Endothelial cell of umbilical vein (primary cell): ENCODE measurements at regions of chr9 and their contacts with region 1.

Region 1: GRCh38 chr9:93003552-93004407 is 54.7 kb upstream of the SUSD3 start:
- DNase-seq: peak; percentile 59
- H3K4me3 ChIP-seq: no peak overlapping the region
- H3K27ac ChIP-seq: no peak overlapping the region
- H3K4me1 ChIP-seq: no peaks in the 10 kb centered on the region
- H3K27me3 ChIP-seq: peaks cover 0 to 4% of the 10 kb centered on the region in 2 experiments
- CTCF ChIP-seq: peak; percentile 62 to 69
- POLR2A ChIP-seq: no peak

Region 2: GRCh38 chr9:92974151-92974710 is 29.5 kb before region 1 on chr9:
- CTCF ChIA-PET with region 1: no interaction called
- POLR2A ChIA-PET with region 1: no interaction called
- dilution Hi-C with region 1: no loop called
- intact Hi-C with region 1: no loop called
- DNase-seq: no peak
- H3K4me3 ChIP-seq: no peak overlapping the region
- H3K27ac ChIP-seq: no peak overlapping the region
- H3K4me1 ChIP-seq: no peaks in the 10 kb centered on the region
- H3K27me3 ChIP-seq: no peaks in the 10 kb centered on the region
- CTCF ChIP-seq: no peak
- POLR2A ChIP-seq: no peak

Region 3: GRCh38 chr9:93013856-93014582 is 10.2 kb after region 1 on chr9:
- CTCF ChIA-PET with region 1: interaction called, 25 read pairs
- POLR2A ChIA-PET with region 1: no interaction called
- dilution Hi-C with region 1: no loop called
- intact Hi-C with region 1: no loop called
- DNase-seq: no peak
- H3K4me3 ChIP-seq: no peak overlapping the region
- H3K27ac ChIP-seq: no peak overlapping the region
- H3K4me1 ChIP-seq: no peaks in the 10 kb centered on the region
- H3K27me3 ChIP-seq: no peaks in the 10 kb centered on the region
- CTCF ChIP-seq: no peak
- POLR2A ChIP-seq: no peak

Region 4: GRCh38 chr9:93108291-93109041 is 104.7 kb after region 1 on chr9:
- CTCF ChIA-PET with region 1: interaction called, 14 read pairs
- POLR2A ChIA-PET with region 1: no interaction called
- dilution Hi-C with region 1: no loop called
- intact Hi-C with region 1: no loop called
- DNase-seq: no peak
- H3K4me3 ChIP-seq: no peak overlapping the region
- H3K27ac ChIP-seq: no peak overlapping the region
- H3K4me1 ChIP-seq: no peaks in the 10 kb centered on the region
- H3K27me3 ChIP-seq: no peaks in the 10 kb centered on the region
- CTCF ChIP-seq: no peak
- POLR2A ChIP-seq: no peak

Region 5: GRCh38 chr9:93159601-93160471 is 156.1 kb after region 1 on chr9:
- CTCF ChIA-PET with region 1: interaction called, 7 read pairs
- POLR2A ChIA-PET with region 1: no interaction called
- dilution Hi-C with region 1: no loop called
- intact Hi-C with region 1: loop called (anchors 5 kb)
- DNase-seq: peak; percentile 66
- H3K4me3 ChIP-seq: no peak overlapping the region
- H3K27ac ChIP-seq: no peak overlapping the region
- H3K4me1 ChIP-seq: no peaks in the 10 kb centered on the region
- H3K27me3 ChIP-seq: no peaks in the 10 kb centered on the region
- CTCF ChIP-seq: peak; percentile 98
- POLR2A ChIP-seq: no peak

Region 6: GRCh38 chr9:93346231-93347112 is 342.7 kb after region 1 on chr9:
- CTCF ChIA-PET with region 1: no interaction called
- POLR2A ChIA-PET with region 1: no interaction called
- dilution Hi-C with region 1: no loop called
- intact Hi-C with region 1: no loop called
- DNase-seq: no peak
- H3K4me3 ChIP-seq: no peak overlapping the region
- H3K27ac ChIP-seq: no peak overlapping the region
- H3K4me1 ChIP-seq: no peaks in the 10 kb centered on the region
- H3K27me3 ChIP-seq: peaks cover 16 to 24% of the 10 kb centered on the region in 2 experiments
- CTCF ChIP-seq: no peak
- POLR2A ChIP-seq: no peak